Gastrocnemius medialis (tissue), 4 donors: ENCODE measurements at regions of chr15 and their contacts with region 1.

Region 1: GRCh38 chr15:41557673-41558399 is 1.2 kb upstream of the TYRO3 start:
- DNase-seq: no peak
- ATAC-seq: peak in 1 of 2 donors; percentile 22
- H3K4me3 ChIP-seq: peak overlapping the region in 3 of 4 donors; percentile 47 to 70 (median 56)
- H3K27ac ChIP-seq: peak overlapping the region in 3 of 4 donors; percentile 15 to 54 (median 38)
- H3K4me1 ChIP-seq: peaks cover 6 to 14% of the 10 kb centered on the region in 2 donors
- H3K27me3 ChIP-seq: peaks cover 0 to 6% (median 3%) of the 10 kb centered on the region in 3 donors
- CTCF ChIP-seq: peak in 4 of 5 experiments; percentile 33 to 75 (median 52)
- POLR2A ChIP-seq: no peak

Region 2: GRCh38 chr15:41585127-41586047 is 27.6 kb after region 1 on chr15:
- in situ Hi-C with region 1: no loop called
- intact Hi-C with region 1: loop called (anchors 2 kb)
- DNase-seq: peak in 1 of 2 donors; percentile 28
- ATAC-seq: peak; percentile 84 to 89
- H3K4me3 ChIP-seq: peak overlapping the region; percentile 45 to 67 (median 56)
- H3K27ac ChIP-seq: peak overlapping the region in 1 of 4 donors; percentile 31
- H3K4me1 ChIP-seq: peaks cover 0 to 3% of the 10 kb centered on the region in 2 donors
- H3K27me3 ChIP-seq: no peaks in the 10 kb centered on the region
- CTCF ChIP-seq: peak in 4 of 5 experiments; percentile 8 to 58 (median 29)
- POLR2A ChIP-seq: no peak

Region 3: GRCh38 chr15:41603941-41604911 is 46.4 kb after region 1 on chr15:
- in situ Hi-C with region 1: no loop called
- intact Hi-C with region 1: loop called (anchors 5 kb)
- DNase-seq: peak; percentile 26 to 34
- ATAC-seq: peak; percentile 88
- H3K4me3 ChIP-seq: peak overlapping the region in 3 of 4 donors; percentile 8 to 43 (median 25)
- H3K27ac ChIP-seq: no peak overlapping the region
- H3K4me1 ChIP-seq: peaks cover 0 to 7% of the 10 kb centered on the region in 2 donors
- H3K27me3 ChIP-seq: no peaks in the 10 kb centered on the region
- CTCF ChIP-seq: peak; percentile 19 to 78 (median 62)
- POLR2A ChIP-seq: no peak

Region 4: DNA sequence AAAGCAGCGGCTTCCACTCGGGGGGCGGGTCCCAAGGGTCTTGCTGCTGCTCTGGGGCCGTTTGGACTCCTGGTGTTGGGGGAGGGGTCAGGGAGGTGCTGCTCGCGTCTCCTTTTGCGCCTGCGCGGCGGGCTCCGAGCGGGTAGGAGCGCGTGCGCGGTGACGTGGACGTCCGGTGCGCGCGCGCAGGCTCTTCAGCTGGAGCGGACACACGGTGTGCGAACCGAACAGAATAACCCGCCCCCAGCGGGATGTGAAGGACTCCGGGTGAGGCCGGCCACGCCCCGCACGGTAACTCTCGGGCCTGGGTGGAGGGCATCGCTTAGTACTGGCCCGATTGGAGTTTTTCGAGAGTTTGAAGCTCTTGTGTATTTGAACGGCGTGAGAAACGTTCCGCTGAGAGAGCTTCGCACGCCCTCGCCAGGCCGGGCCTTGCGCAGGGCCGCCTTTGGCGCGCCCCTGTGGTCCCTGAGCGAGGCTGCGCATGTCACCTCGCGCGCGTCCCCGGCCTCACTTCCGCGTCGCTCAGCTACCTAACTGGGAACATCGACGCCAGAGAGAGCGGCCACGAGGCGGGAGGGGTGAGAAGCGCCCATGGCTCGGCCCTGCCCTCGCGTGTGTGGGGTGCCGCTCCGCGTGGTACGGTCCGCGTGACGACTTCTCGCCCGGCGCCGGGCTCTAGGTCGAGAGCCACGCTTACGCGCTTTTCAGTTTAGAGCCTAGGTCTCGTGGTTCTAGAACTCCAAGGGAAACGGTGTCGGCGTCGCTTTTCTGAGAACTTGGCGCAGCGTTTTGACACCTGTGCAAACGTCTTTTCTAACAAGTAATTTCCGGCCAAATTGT is 102.6 kb after region 1 on chr15 and contains the start of gene MGA:
- in situ Hi-C with region 1: no loop called
- intact Hi-C with region 1: loop called (anchors 5 kb)
- DNase-seq: peak; percentile 73 to 79
- ATAC-seq: peak; percentile 79 to 81
- H3K4me3 ChIP-seq: peak within 1 kb of the TSS; percentile 52 to 88 (median 70)
- H3K27ac ChIP-seq: peak within 1 kb of the TSS; percentile 70 to 83 (median 80)
- H3K4me1 ChIP-seq: peaks cover 38 to 40% of the 10 kb centered on the region in 2 donors
- H3K27me3 ChIP-seq: no peaks in the 10 kb centered on the region
- CTCF ChIP-seq: peak in 2 of 5 experiments; percentile 10 to 13
- POLR2A ChIP-seq: peak; percentile 38 to 71
- total RNA-seq, gene MGA: 17.0 to 27.8 (median 23.6) TPM

Region 5: GRCh38 chr15:41779662-41780157 is 221.9 kb after region 1 on chr15:
- in situ Hi-C with region 1: no loop called
- intact Hi-C with region 1: no loop called
- DNase-seq: no peak
- ATAC-seq: peak; percentile 90 to 95
- H3K4me3 ChIP-seq: no peak overlapping the region
- H3K27ac ChIP-seq: peak overlapping the region; percentile 18 to 68 (median 45)
- H3K4me1 ChIP-seq: peaks cover 30 to 33% of the 10 kb centered on the region in 2 donors
- H3K27me3 ChIP-seq: no peaks in the 10 kb centered on the region
- CTCF ChIP-seq: no peak
- POLR2A ChIP-seq: no peak

Region 6: DNA sequence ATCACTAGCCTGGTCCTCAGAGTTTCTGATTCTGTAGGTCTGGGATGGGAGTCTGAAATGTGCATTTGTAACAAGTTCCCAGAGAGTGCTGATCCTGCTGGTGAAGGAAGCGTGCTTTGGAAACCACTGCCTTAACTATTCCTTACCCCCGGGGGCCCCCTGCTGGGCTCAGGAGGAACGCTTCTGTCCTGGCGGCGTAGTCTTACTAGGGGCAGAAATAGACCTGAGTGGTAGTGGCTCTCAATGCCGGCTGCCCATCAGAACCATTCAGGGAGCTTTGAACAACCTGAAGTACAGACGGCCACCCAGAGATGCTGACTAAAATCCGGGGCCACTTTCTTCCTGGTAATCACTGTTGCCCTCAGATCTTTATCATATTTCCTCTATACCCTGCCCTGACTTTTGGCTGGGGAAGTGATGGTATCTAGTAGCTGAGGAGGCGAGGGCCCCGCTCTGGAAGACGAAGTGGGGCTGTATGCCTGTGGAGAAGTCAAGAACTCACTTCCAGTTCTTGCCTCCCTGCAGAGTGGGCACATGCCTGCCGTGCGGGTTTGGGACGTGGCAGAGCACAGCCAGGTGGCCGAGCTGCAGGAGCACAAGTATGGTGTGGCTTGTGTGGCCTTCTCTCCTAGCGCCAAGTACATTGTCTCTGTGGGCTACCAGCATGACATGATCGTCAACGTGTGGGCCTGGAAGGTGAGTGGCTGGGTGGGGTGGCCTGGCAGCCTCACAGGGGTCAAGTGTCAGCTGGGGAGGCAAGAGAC is 253.8 kb after region 1 on chr15:
- in situ Hi-C with region 1: no loop called
- intact Hi-C with region 1: loop called (anchors 5 kb)
- DNase-seq: peak; percentile 67 to 80
- ATAC-seq: peak; percentile 94 to 97
- H3K4me3 ChIP-seq: no peak overlapping the region
- H3K27ac ChIP-seq: no peak overlapping the region
- H3K4me1 ChIP-seq: no peaks in the 10 kb centered on the region
- H3K27me3 ChIP-seq: no peaks in the 10 kb centered on the region
- CTCF ChIP-seq: peak; percentile 87 to 93 (median 93)
- POLR2A ChIP-seq: no peak